Endothelial cell of umbilical vein (primary cell): ENCODE measurements at regions of chr9 and their contacts with region 1.

Region 1: GRCh38 chr9:97982683-97983588 is at the start of gene ANP32B:
- DNase-seq: peak; percentile 92
- H3K4me3 ChIP-seq: peak within 1 kb of the TSS; percentile 64 to 90 (median 75)
- H3K27ac ChIP-seq: peak within 1 kb of the TSS; percentile 94
- H3K4me1 ChIP-seq: peaks cover 24% of the 10 kb centered on the region
- H3K27me3 ChIP-seq: no peaks in the 10 kb centered on the region
- CTCF ChIP-seq: peak; percentile 86 to 88
- POLR2A ChIP-seq: peak; percentile 53
- total RNA-seq, gene ANP32B: 152 and 173 TPM in 2 replicates

Region 2: DNA sequence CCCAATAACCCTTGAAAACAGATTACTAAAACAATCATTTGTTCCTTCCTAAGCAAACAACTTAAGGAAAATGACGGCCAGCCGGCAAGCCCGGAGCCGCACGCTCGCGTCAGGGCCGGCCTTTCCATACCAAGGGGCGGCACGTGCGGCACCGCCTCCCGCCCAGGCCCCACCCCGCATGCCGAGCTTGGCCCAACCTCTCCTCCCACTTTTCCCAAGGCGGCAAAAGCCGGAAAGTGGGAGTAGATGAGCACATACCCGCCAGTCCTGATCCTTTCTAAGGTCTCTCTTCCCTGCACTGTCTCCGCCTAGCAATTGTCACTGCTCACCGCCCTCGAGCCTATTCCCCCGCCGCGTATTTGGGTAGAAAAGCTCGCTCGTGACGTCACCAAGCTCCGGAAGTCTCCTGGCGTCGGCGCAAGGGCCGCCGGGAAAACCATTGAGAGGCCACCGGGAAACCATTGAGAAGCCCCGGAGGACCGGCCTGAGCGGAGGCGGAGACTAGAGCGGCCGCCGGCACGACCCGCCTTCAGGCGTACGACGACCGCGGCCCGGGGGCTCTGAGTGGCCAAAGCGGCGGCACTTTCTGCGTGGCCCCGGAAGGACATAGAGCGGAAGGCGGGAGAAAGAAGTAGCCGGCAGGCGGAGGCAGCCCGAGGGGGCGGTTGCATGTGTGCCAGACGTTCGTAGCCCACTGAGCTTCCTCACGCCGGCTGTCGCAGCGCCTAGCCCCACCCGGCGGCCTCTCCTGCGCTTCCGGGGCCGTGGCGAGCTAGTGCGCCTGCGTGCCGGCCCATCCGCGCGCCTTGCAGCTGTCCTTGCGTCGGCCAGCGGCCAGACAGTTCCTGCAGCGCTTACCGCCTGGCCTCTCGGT is 349.7 kb before region 1 on chr9 and contains the starts of genes NCBP1 and TSTD2:
- CTCF ChIA-PET with region 1: no interaction called
- POLR2A ChIA-PET with region 1: no interaction called
- dilution Hi-C with region 1: no loop called
- intact Hi-C with region 1: loop called (anchors 1 kb)
- DNase-seq: peak; percentile 99
- H3K4me3 ChIP-seq: peak within 1 kb of the TSS; percentile 83 to 100 (median 99)
- H3K27ac ChIP-seq: peak within 1 kb of the TSS; percentile 94
- H3K4me1 ChIP-seq: peaks cover 28% of the 10 kb centered on the region
- H3K27me3 ChIP-seq: no peaks in the 10 kb centered on the region
- CTCF ChIP-seq: peak in 1 of 2 donors; percentile 12
- POLR2A ChIP-seq: peak; percentile 90
- total RNA-seq, gene NCBP1: 42.8 and 45.3 TPM in 2 replicates
- total RNA-seq, gene TSTD2: 15.1 and 15.9 TPM in 2 replicates

Region 3: GRCh38 chr9:98010445-98010844 is 27.5 kb after region 1 on chr9:
- CTCF ChIA-PET with region 1: interaction called, 5 read pairs
- POLR2A ChIA-PET with region 1: no interaction called
- dilution Hi-C with region 1: no loop called
- intact Hi-C with region 1: loop called (anchors 1 kb)
- DNase-seq: peak; percentile 82
- H3K4me3 ChIP-seq: no peak overlapping the region
- H3K27ac ChIP-seq: peak overlapping the region; percentile 71
- H3K4me1 ChIP-seq: peaks cover 42% of the 10 kb centered on the region
- H3K27me3 ChIP-seq: no peaks in the 10 kb centered on the region
- CTCF ChIP-seq: no peak
- POLR2A ChIP-seq: peak; percentile 16

Region 4: DNA sequence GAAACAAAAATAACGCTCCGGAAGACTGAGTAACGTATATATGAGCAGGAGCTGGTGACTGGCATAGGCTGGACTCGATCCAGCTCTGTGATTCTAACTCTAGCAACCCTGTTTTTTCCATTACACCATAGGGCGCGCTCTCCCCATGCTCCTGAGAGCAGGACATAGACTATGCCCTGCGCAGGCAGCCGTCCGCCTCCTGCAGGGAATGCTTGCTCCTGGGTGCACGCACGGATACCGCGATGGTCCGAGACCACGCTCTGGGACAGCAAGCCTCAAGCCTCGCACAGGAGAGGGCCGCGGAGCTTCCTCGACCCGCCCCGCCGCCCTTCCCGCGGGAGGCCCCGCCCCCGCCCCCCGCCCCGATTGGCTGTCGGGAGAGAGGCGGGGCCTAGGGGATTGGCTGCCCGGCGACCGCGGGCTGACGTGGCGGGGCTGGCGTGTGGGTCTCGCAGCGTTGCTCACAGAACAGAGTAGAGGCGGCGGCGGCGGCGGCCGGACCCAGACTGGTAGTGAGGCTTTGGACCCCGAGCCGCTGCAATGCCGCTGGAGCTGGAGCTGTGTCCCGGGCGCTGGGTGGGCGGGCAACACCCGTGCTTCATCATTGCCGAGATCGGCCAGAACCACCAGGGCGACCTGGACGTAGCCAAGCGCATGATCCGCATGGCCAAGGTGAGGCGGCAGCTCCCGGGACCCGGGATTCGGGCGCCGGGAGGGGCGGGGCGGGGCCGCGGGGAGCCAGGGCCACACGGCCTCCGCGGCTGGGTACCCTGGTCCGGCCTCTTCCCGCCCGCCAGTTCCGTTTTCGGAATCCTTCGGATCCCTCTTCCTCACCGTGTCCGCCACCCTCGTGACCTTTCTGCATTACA is 73.6 kb after region 1 on chr9 and contains the start of gene NANS:
- CTCF ChIA-PET with region 1: interaction called, 17 read pairs
- POLR2A ChIA-PET with region 1: interaction called, 4 read pairs
- dilution Hi-C with region 1: no loop called
- intact Hi-C with region 1: loop called (anchors 1 kb)
- DNase-seq: peak; percentile 99
- H3K4me3 ChIP-seq: peak within 1 kb of the TSS; percentile 60 to 91 (median 69)
- H3K27ac ChIP-seq: peak within 1 kb of the TSS; percentile 80
- H3K4me1 ChIP-seq: peaks cover 15% of the 10 kb centered on the region
- H3K27me3 ChIP-seq: no peaks in the 10 kb centered on the region
- CTCF ChIP-seq: peak in 1 of 2 donors; percentile 8
- POLR2A ChIP-seq: peak; percentile 93
- total RNA-seq, gene NANS: 72.5 and 85.1 TPM in 2 replicates

Region 5: DNA sequence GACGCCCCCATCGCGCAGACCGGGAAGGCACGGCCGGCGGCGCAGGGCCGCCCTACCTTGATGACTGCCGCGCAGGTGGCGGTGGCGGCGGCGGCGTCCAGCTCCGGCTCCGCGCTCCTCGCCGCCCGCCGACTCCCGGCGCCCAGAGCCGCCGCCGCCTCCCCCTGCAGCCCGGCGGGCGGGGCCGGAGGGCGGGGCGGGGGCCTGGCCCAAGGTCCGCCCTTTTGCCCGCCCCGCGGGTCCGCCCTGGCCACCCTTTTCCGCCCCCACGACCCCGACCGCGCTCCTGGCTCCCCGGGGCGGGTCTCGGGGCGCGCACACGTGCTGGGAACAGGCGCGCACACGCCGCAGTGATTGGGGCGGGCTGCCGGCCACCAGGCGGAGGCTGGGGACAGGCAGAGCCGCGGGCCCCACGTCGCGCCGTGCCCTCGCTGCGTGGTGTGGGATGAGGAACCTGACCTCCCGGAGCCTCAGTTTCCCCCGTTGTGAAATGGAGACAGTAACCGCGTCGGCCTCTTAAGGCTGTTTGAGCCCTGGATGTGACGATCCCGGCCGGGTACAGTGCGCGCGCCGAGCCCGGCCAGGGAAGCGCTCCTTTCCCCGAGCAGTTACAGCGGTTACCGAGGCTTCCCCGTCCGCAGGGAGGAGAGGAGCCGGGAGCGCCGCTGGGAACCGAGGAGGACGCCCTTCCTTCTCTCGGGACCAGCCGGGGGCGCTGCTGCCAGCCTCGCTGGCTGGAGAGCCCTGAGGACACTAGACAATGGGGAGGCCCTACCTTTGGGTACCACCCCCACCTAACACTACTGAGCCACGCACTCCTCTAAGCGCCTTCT is 209.8 kb after region 1 on chr9 and contains the start of gene CORO2A:
- CTCF ChIA-PET with region 1: no interaction called
- POLR2A ChIA-PET with region 1: no interaction called
- dilution Hi-C with region 1: no loop called
- intact Hi-C with region 1: loop called (anchors 1 kb)
- DNase-seq: peak; percentile 66
- H3K4me3 ChIP-seq: peak within 1 kb of the TSS; percentile 37 to 73 (median 59)
- H3K27ac ChIP-seq: no peak within 1 kb of the TSS
- H3K4me1 ChIP-seq: no peaks in the 10 kb centered on the region
- H3K27me3 ChIP-seq: no peaks in the 10 kb centered on the region
- CTCF ChIP-seq: peak; percentile 29 to 64
- POLR2A ChIP-seq: no peak
- total RNA-seq, gene CORO2A: 0.30 and 0.53 TPM in 2 replicates

Region 6: DNA sequence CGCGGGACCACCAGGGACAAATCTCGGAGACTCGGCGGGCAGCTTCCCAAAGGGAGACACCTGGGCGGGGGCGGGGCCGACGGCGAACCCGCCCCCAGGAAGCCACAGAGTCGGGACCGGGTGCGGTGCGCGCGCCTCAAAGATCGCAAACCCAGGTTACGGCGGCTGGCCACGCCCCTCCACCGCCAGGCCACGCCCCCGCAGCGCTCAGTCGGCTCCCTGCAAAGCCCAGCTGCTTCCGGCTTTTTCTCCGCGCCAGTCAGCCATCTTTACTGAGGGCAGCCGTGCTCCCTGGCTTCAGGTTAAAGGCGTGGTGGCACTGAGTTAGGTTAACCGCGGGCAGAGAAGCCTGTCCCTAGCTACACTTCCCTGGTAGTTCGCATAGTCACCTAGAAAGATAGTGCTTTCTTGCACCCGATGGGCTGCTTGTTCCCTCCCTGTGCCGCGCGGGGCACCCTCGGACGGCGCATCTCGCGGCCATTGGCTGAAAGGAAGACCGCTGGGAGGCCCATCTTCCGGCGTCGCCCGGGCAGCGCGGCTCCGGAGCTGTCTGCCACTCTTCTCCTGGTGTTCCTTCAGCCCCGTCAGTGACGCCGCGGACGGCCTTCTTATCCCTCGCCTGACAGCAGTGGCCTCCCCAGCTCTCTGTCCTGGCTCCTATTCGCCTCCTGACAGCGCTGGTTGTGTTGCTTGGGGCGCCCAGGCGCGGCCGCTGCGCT is 272.8 kb after region 1 on chr9 and contains the start of gene TBC1D2:
- CTCF ChIA-PET with region 1: no interaction called
- POLR2A ChIA-PET with region 1: no interaction called
- dilution Hi-C with region 1: no loop called
- intact Hi-C with region 1: loop called (anchors 1 kb)
- DNase-seq: peak; percentile 94
- H3K4me3 ChIP-seq: peak within 1 kb of the TSS; percentile 67 to 81 (median 80)
- H3K27ac ChIP-seq: peak within 1 kb of the TSS; percentile 75
- H3K4me1 ChIP-seq: peaks cover 22% of the 10 kb centered on the region
- H3K27me3 ChIP-seq: no peaks in the 10 kb centered on the region
- CTCF ChIP-seq: peak in 1 of 2 donors; percentile 24
- POLR2A ChIP-seq: peak; percentile 64
- total RNA-seq, gene TBC1D2: 3.4 and 3.6 TPM in 2 replicates